ENCODE measurements at regions of chr20 and their contacts with region 1.

Region 1: GRCh38 chr20:3173610-3174441 is 477 bp upstream of the LZTS3 start:
- DNase-seq: peak; percentile 92
- H3K4me3 Mint-ChIP-seq: peak overlapping the region; percentile 84
- H3K27ac Mint-ChIP-seq: no peak overlapping the region
- H3K4me1 Mint-ChIP-seq: peaks cover 6% of the 10 kb centered on the region
- H3K27me3 Mint-ChIP-seq: peaks cover 17% of the 10 kb centered on the region

Region 2: DNA sequence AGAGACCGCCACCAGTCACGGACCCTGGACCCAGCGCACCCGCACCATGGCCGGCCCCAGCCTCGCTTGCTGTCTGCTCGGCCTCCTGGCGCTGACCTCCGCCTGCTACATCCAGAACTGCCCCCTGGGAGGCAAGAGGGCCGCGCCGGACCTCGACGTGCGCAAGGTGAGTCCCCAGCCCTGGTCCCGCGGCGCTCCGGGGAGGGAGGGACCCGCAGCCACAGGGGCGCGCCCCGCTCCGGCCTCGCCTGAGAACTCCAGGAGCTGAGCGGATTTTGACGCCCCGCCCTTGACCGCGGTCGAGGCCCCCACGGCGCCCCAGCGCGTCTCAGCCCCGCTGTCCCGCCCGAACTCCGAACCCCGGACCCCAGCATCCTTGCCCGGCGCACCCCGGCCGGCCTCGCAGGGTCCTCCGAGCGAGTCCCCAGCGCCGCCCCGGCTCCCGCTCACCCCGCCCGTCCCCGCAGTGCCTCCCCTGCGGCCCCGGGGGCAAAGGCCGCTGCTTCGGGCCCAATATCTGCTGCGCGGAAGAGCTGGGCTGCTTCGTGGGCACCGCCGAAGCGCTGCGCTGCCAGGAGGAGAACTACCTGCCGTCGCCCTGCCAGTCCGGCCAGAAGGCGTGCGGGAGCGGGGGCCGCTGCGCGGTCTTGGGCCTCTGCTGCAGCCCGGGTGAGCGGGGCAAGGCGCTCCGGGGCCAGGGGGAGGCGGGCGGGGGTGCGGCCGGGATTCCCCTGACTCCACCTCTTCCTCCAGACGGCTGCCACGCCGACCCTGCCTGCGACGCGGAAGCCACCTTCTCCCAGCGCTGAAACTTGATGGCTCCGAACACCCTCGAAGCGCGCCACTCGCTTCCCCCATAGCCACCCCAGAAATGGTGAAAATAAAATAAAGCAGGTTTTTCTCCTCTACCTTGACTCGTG is 102.0 kb before region 1 on chr20 and contains the start of gene OXT:
- CTCF ChIA-PET with region 1: no interaction called
- POLR2A ChIA-PET with region 1: no interaction called
- intact Hi-C with region 1: loop called (anchors 10 kb)
- DNase-seq: peak; percentile 82
- H3K4me3 Mint-ChIP-seq: peak within 1 kb of the TSS; percentile 74
- H3K27ac Mint-ChIP-seq: no peak within 1 kb of the TSS
- H3K4me1 Mint-ChIP-seq: peaks cover 24% of the 10 kb centered on the region
- H3K27me3 Mint-ChIP-seq: no peaks in the 10 kb centered on the region
- total RNA-seq, gene OXT: 1.0 TPM in 1 of 2 experiments, not detected in the other

Measured in activated CD4-positive, alpha-beta memory T cell treated with anti-CD3 and anti-CD28 coated beads for 36 hours (primary cell).